Activated T-helper 1 cell treated with anti-CD3 and anti-CD28 coated beads, Interleukin-12 subunit alpha, Interleukin-12 subunit beta, Interleukin-2, Interleukin-4 antibody, amounts not matched to agents 30 ng/mL and 10 ng/mL and 1 ng/mL, durations not matched to agents 14 hours and 24 hours and 36 hours (primary cell): ENCODE measurements at regions of chr9 and their contacts with region 1.

Region 1: DNA sequence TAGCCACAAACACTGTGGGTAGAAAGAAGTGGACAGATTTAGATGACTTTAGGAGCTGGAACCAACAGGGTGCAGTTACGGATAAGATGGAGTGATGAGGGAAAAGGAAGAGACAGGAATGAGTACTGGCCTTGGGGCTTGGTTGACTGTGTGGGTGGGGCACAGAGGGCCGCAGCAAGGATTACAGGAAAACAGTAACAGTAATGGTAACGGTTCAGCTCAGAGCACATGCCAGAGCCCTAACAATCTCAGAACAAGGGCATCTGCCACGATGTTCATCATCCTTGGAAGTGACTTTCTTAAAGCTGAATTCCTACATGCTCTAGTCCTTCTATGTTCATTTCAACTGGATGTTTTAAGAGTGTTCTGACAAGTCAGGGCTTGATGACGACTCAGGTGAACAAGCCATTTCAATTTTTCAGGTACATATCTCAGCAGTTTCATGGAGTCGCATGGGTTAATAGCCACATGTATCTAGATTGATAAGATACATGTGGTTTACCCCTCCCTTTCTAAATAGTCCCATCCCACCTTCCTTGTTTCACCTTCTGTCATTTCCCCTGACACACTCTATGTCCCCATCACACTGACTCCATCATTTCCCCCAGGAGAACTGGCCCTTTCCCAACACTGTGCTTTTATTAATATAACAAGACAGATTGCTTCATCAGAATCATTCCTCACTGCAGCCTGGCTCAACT is 65.0 kb downstream of the CEMIP2 start:
- DNase-seq: no peak
- H3K4me3 Mint-ChIP-seq: no peak overlapping the region
- H3K27ac Mint-ChIP-seq: peak overlapping the region; percentile 3
- H3K4me1 Mint-ChIP-seq: peaks cover 39% of the 10 kb centered on the region
- H3K27me3 Mint-ChIP-seq: no peaks in the 10 kb centered on the region

Region 2: DNA sequence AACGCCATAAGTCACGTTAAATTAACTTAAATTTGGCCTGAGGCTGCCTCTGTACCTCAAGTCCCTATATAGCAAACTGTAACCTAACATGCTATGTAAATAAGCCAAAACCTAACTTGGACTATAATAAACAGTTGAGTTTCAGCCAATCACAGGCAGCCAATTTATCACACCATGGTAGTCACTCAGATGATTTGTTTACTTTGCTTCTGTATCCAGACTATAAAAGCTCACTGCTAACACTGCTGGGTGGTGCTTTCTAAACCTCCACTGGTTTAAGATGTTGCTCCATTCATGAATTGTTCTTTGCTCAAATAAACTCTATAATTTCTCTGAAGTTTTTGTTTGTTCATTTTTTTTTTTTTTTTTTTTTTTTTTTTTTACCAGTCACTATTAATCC is 644.7 kb before region 1 on chr9:
- intact Hi-C with region 1: no loop called
- DNase-seq: no peak
- H3K4me3 Mint-ChIP-seq: no peak overlapping the region
- H3K27ac Mint-ChIP-seq: no peak overlapping the region
- H3K4me1 Mint-ChIP-seq: no peaks in the 10 kb centered on the region
- H3K27me3 Mint-ChIP-seq: no peaks in the 10 kb centered on the region

Region 3: DNA sequence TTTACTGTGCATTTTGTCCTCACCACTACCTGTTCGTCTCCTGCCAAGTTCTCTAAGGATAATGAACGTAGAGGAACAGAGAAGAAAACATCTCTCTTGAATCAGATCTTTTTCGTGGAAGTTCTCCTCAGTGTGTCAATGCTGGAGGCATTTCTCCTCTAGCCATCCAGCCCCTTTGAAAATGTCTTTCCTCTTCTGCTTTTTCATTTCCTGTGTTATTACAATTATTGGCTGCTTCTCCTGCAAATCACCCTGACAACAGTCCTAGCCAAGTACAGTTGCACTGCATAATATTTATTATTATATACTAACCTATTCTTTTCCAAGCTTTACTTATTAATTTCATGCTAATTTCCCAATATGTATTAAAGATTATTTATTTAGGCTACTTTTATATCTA is 520.1 kb before region 1 on chr9:
- intact Hi-C with region 1: no loop called
- DNase-seq: no peak
- H3K4me3 Mint-ChIP-seq: no peak overlapping the region
- H3K27ac Mint-ChIP-seq: no peak overlapping the region
- H3K4me1 Mint-ChIP-seq: no peaks in the 10 kb centered on the region
- H3K27me3 Mint-ChIP-seq: no peaks in the 10 kb centered on the region

Region 4: DNA sequence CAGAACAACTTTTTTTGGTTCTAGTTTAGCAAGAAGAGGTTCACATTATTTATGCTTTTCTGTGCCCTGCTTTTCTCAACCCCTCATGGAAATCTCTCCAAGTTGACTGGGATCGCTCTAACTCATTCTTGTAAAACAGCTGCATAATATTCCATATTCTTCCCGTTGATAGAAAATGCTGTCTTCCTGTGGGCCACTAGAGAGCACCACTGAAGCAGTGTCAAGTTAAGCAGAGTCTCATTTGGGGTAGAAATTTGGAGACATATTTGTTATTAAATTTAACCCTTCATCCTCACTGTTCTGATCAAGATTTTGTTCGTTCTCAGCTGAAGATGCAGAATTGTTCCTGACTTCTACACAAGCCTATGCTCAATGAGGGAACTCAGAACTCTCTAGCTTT is 75.1 kb before region 1 on chr9:
- intact Hi-C with region 1: loop called (anchors 5 kb)
- DNase-seq: no peak
- H3K4me3 Mint-ChIP-seq: no peak overlapping the region
- H3K27ac Mint-ChIP-seq: no peak overlapping the region
- H3K4me1 Mint-ChIP-seq: peaks cover 45% of the 10 kb centered on the region
- H3K27me3 Mint-ChIP-seq: peaks cover 19% of the 10 kb centered on the region